Heart right ventricle (tissue), 16 donors: ENCODE measurements at regions of chr13 and their contacts with region 1.

Region 1: GRCh38 chr13:37118016-37118415 is 12.6 kb upstream of the CSNK1A1L start:
- DNase-seq: peak; percentile 48 to 60
- ATAC-seq: peak; percentile 82 to 99 (median 92)
- H3K4me3 ChIP-seq: no peak overlapping the region
- H3K27ac ChIP-seq: peak overlapping the region in 5 of 10 donors; percentile 14 to 61 (median 43)
- H3K4me1 ChIP-seq: peaks cover 0 to 17% (median 0%) of the 10 kb centered on the region in 9 donors
- H3K27me3 ChIP-seq: no peaks in the 10 kb centered on the region
- CTCF ChIP-seq: no peak

Region 2: DNA sequence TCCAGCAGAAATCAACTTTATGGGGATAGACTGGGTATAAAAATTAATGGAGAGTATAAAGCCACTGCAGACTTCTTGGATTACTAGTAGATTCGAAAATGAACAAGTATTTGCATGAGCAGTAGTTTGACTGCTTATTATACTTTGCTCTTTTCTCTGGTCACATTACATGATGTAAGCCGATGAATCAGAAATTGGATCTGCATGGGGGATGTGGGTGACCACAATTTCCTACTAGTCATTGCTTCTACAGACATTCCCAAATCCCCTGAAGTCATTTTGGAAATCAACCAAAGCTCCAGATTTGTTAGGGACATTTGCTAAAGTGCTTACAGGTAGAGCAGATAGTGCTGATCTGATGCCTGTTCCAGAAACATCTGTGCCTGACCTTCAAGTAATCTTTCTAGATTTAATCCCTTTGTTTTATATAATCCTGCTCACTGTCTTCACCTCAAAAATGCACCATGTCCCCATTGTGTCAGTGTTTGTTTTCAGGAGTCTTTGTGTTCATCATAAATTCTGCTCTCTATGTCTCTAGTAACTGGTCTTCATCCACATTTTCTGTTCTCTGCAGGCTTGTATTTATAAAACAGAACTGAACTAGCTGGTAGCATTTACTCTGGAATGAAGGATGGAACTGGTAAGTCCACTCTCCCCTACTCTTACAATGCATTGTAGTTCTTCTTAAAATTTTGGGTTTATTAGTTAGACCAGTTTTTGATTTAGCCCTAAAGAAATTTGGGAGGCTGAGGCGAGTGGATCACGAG is 188.9 kb after region 1 on chr13:
- intact Hi-C with region 1: loop called in 1 of 10 experiments (anchors 10 kb)
- DNase-seq: no peak
- ATAC-seq: peak in 1 of 8 donors; percentile 72
- H3K4me3 ChIP-seq: no peak overlapping the region
- H3K27ac ChIP-seq: no peak overlapping the region
- H3K4me1 ChIP-seq: no peaks in the 10 kb centered on the region
- H3K27me3 ChIP-seq: no peaks in the 10 kb centered on the region
- CTCF ChIP-seq: no peak